Activated CD4-positive, alpha-beta T cell treated with anti-CD3 and anti-CD28 coated beads, Interleukin-2, amount 10 ng/mL, durations not matched to agents 24 days and 14 days (primary cell): ENCODE measurements at regions of chr13 and their contacts with region 1.

Region 1: GRCh38 chr13:30739761-30740642 is 4.7 kb downstream of the ALOX5AP start:
- DNase-seq: peak; percentile 90
- H3K4me3 Mint-ChIP-seq: peak overlapping the region; percentile 78
- H3K27ac Mint-ChIP-seq: peak overlapping the region; percentile 88
- H3K4me1 Mint-ChIP-seq: peaks cover 73% of the 10 kb centered on the region
- H3K27me3 Mint-ChIP-seq: no peaks in the 10 kb centered on the region

Region 2: GRCh38 chr13:30158774-30159445 is 581.1 kb before region 1 on chr13:
- intact Hi-C with region 1: loop called (anchors 2 kb)
- DNase-seq: peak; percentile 75
- H3K4me3 Mint-ChIP-seq: peak overlapping the region; percentile 77
- H3K27ac Mint-ChIP-seq: peak overlapping the region; percentile 91
- H3K4me1 Mint-ChIP-seq: peaks cover 42% of the 10 kb centered on the region
- H3K27me3 Mint-ChIP-seq: peaks cover 2% of the 10 kb centered on the region

Region 3: GRCh38 chr13:30422054-30422839 is 317.8 kb before region 1 on chr13 and contains the start of gene UBE2L5:
- intact Hi-C with region 1: loop called (anchors 5 kb)
- DNase-seq: peak; percentile 95
- H3K4me3 Mint-ChIP-seq: peak within 1 kb of the TSS; percentile 89
- H3K27ac Mint-ChIP-seq: peak within 1 kb of the TSS; percentile 86
- H3K4me1 Mint-ChIP-seq: peaks cover 26% of the 10 kb centered on the region
- H3K27me3 Mint-ChIP-seq: no peaks in the 10 kb centered on the region
- total RNA-seq, gene UBE2L5: not detected in 2 replicates

Region 4: GRCh38 chr13:30504081-30504480 is 235.9 kb before region 1 on chr13:
- intact Hi-C with region 1: no loop called
- DNase-seq: no peak
- H3K4me3 Mint-ChIP-seq: no peak overlapping the region
- H3K27ac Mint-ChIP-seq: no peak overlapping the region
- H3K4me1 Mint-ChIP-seq: peaks cover 13% of the 10 kb centered on the region
- H3K27me3 Mint-ChIP-seq: peaks cover 2% of the 10 kb centered on the region

Region 5: DNA sequence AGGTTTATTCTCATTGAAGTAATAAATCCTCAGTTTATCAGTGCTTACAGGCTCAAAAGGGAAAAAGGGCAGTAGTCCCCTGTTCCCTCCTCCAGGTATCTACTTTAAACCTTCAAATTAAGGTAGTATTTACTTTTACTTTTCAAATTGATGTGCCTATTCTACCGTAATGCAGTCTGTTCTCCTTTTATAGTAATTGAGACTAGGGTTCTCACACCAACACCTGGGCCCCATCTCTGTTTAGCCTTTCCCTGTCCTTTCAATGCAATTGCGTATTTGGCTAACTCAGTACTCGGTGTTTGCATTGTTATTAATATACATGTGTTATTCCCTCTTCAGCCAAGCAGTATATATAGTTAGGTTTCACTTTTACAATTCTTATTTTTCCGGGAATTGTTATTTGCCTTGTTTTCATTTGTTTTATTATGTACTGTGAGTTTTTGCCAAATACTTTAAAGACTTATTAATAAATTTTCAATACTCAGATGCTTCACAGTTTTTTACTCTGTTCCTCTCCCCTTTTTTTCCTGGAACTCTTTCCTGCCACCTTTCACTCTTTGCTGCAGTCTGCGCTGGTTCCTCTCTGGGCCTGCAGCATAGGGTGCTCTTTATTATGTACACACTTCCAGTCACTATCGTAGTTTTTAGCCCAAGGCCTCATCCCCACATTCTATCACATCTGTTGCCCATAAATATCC is 92.0 kb before region 1 on chr13:
- intact Hi-C with region 1: no loop called
- DNase-seq: no peak
- H3K4me3 Mint-ChIP-seq: no peak overlapping the region
- H3K27ac Mint-ChIP-seq: no peak overlapping the region
- H3K4me1 Mint-ChIP-seq: peaks cover 29% of the 10 kb centered on the region
- H3K27me3 Mint-ChIP-seq: no peaks in the 10 kb centered on the region

Region 6: GRCh38 chr13:30673669-30674521 is 66.1 kb before region 1 on chr13:
- intact Hi-C with region 1: loop called (anchors 1 kb)
- DNase-seq: peak; percentile 96
- H3K4me3 Mint-ChIP-seq: peak overlapping the region; percentile 86
- H3K27ac Mint-ChIP-seq: peak overlapping the region; percentile 80
- H3K4me1 Mint-ChIP-seq: peaks cover 9% of the 10 kb centered on the region
- H3K27me3 Mint-ChIP-seq: peaks cover 25% of the 10 kb centered on the region

Region 7: GRCh38 chr13:30720172-30720869 is 19.7 kb before region 1 on chr13:
- intact Hi-C with region 1: no loop called
- DNase-seq: no peak
- H3K4me3 Mint-ChIP-seq: no peak overlapping the region
- H3K27ac Mint-ChIP-seq: no peak overlapping the region
- H3K4me1 Mint-ChIP-seq: peaks cover 15% of the 10 kb centered on the region
- H3K27me3 Mint-ChIP-seq: peaks cover 5% of the 10 kb centered on the region

Region 8: GRCh38 chr13:30766231-30766630 is 26.2 kb after region 1 on chr13:
- intact Hi-C with region 1: loop called (anchors 2 kb)
- DNase-seq: no peak
- H3K4me3 Mint-ChIP-seq: no peak overlapping the region
- H3K27ac Mint-ChIP-seq: no peak overlapping the region
- H3K4me1 Mint-ChIP-seq: peaks cover 18% of the 10 kb centered on the region
- H3K27me3 Mint-ChIP-seq: no peaks in the 10 kb centered on the region

Region 9: GRCh38 chr13:30802953-30803478 is 63.0 kb after region 1 on chr13:
- intact Hi-C with region 1: loop called (anchors 1 kb)
- DNase-seq: peak; percentile 94
- H3K4me3 Mint-ChIP-seq: peak overlapping the region; percentile 65
- H3K27ac Mint-ChIP-seq: no peak overlapping the region
- H3K4me1 Mint-ChIP-seq: peaks cover 18% of the 10 kb centered on the region
- H3K27me3 Mint-ChIP-seq: no peaks in the 10 kb centered on the region

Region 10: DNA sequence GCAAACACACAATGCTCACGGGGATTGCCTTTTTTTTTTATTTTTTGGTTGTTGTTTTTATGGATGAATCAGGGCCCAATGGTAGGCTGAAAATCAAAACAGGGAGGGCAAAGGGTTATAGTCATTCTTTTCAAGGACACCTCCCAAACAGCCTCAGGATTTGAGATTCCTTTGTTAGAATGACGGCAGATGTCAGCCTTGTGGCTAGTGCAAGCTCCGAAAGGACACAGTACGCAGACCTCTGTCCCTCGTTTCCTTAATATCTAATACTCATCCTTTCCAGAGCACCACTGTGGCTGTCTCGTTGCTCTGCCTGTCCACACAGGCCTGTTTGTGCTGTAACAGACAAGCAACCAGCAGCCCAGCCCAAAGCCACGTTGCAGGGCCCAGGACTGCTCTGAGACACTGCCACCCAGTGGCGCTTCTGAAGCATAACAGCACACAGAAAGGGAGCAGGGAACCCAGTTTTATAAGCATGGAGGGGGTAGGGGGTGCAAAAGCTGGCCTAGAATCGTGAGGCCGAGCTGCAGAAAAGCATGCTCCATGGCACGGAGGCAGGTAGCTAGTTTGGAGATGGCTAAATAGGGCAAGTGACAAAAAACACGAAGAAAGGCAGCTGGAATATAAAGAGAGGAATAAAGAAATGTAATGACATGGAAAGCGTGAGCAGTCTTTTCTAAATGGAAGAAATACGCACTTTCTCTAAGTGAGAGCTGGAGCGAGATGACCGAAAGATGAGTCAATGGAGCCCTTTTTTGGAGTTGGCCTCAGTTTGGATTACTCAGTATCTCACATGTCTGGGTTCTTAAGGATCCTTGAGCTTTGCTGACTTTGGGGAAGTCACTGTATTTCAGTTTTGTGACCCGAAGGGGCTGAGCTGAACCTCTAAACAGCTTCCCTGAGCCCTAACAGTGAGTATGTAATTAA is 125.4 kb after region 1 on chr13:
- intact Hi-C with region 1: loop called (anchors 5 kb)
- DNase-seq: peak; percentile 83
- H3K4me3 Mint-ChIP-seq: no peak overlapping the region
- H3K27ac Mint-ChIP-seq: no peak overlapping the region
- H3K4me1 Mint-ChIP-seq: peaks cover 8% of the 10 kb centered on the region
- H3K27me3 Mint-ChIP-seq: peaks cover 6% of the 10 kb centered on the region

Region 11: DNA sequence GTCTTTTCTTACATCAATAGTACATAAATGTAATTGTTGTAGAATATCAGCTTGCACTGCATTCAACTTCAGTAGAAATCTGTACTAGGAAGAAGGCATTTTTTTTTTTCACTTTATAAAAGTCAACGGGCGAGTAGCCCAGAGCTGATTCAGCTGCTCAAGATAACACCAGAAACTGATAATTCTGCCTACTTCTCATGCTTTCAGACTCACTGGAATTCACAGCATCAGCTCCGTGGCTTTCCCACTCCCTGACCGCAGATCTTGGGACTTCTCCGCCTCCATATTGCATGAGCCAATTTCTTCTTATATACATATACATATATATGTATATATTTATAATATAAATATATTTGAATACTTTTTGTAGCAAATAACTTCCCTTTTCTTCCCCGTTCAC is 736.3 kb after region 1 on chr13:
- intact Hi-C with region 1: no loop called
- DNase-seq: no peak
- H3K4me3 Mint-ChIP-seq: no peak overlapping the region
- H3K27ac Mint-ChIP-seq: no peak overlapping the region
- H3K4me1 Mint-ChIP-seq: no peaks in the 10 kb centered on the region
- H3K27me3 Mint-ChIP-seq: no peaks in the 10 kb centered on the region